Right ventricle myocardium inferior (tissue), 1 donor: ENCODE measurements at regions of chr2 and their contacts with region 1.

Region 1: DNA sequence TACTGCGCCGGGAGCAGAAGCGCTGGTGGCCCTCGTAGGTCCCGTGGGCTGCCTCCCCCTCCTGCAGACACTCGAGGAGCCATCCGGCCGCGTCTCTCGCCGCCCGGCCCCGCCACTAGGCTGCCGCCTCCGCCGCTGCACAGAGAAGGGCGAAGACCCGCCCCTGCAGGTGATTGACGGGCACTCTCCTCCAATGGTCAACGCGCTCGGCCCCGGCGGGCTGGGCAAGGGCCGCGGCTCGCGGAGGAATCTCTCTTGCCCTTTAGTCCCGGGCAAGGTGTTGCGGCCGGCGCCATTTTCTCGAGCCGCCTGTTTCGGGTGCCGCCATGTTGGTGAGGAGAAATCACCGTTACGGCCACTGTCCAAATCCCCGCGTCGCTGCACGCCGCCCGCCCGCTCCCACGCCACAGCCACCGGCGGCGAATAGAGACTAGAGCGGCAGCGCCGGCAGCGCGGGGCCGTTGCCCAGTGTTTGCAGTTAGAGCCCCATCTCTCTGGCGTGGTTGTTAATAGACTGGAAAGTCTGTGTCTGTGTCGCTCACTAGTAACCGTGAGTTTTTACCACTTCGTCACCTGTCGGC is at the start of gene ZC3H6:
- DNase-seq: peak; percentile 99
- ATAC-seq: peak; percentile 99
- total RNA-seq, gene ZC3H6: 16.1 TPM

Region 2: DNA sequence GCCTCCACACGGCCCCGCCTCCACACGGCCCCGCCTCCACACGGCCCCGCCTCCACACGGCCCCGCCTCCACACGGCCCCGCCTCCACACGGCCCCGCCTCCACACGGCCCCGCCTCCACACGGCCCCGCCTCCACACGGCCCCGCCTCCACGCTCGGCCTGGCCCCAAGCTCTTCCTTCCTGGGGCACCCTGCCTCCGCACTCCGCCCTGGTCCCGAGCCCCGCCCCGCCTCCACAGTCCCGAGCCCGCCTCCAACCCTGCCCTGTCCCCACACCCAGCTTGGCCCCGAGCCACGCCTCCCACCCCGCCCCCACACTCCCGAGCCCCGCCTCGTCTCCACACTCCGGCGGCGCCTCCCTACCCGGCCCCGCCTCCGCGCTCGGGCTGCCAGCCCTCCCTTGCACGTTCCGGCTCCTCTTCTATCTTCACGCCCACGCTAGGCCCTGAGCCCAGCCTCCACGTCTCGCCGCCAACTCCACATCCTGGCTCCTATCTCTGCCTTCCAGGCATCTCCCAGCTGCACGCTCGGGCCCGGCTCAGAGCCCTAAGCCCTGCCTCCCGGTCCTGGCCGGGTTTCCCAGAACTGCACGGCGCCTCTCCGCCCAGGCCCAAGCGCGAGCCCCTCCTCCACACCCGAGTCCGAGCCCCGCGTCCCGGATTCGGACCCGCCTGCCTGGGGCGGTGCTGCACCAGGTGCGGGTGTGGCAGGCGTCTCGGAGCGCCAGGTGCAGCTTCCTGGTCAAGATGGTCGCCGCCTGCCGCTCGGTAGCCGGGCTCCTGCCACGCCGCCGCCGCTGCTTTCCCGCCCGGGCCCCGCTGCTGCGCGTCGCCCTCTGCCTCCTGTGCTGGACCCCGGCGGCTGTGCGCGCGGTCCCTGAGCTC is 220.3 kb before region 1 on chr2 and contains the start of gene TMEM87B:
- intact Hi-C with region 1: loop called (anchors 1 kb)
- DNase-seq: peak; percentile 99
- ATAC-seq: peak; percentile 87
- total RNA-seq, gene TMEM87B: 6.5 TPM

Region 3: DNA sequence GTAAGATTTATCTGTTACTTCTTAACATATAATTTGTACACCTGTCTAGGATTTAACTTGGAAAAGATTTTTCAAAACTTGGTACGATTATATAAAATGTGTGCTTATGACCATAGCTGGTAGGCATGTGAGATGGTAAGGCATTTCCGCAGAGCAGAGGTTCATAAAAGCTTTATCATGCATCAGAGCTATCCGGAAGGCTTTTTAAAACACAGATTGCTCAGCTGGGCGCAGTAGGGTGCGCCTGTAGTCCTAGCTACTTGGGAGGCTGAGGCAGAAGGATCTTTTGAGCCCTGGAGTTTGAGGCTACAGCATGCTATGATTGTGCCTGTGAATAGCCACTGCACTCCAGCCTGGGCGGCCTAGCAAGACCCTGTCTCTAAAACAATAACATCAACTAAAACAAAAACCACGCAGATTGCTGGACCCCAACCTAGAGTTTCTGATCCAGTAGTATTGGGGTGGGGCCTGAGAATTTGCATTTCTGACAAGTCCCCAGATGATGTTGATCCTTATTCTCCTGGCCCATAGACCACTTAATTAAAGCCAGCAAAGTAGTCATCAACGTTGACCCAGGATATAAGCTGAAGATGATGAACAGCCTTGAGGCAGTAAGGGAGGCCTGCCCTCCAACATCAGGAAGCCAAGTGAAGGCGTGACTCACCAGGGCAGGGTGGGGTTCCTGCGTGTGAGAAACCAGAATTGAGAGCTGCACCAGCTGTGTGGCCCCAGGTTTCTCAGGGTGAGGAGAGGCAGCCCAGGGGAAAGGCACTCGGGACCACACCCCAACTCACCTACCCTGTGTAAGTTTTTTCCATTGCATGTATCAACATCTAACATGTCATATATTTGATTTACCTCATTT is 348.7 kb after region 1 on chr2:
- intact Hi-C with region 1: no loop called
- DNase-seq: peak; percentile 71
- ATAC-seq: no peak